Activated T-helper 1 cell treated with anti-CD3 and anti-CD28 coated beads, Interleukin-12 subunit alpha, Interleukin-12 subunit beta, Interleukin-2, Interleukin-4 antibody, amounts not matched to agents 30 ng/mL and 10 ng/mL and 1 ng/mL, durations not matched to agents 14 hours and 24 hours and 36 hours (primary cell): ENCODE measurements at regions of chr19 and their contacts with region 1.

Region 1: DNA sequence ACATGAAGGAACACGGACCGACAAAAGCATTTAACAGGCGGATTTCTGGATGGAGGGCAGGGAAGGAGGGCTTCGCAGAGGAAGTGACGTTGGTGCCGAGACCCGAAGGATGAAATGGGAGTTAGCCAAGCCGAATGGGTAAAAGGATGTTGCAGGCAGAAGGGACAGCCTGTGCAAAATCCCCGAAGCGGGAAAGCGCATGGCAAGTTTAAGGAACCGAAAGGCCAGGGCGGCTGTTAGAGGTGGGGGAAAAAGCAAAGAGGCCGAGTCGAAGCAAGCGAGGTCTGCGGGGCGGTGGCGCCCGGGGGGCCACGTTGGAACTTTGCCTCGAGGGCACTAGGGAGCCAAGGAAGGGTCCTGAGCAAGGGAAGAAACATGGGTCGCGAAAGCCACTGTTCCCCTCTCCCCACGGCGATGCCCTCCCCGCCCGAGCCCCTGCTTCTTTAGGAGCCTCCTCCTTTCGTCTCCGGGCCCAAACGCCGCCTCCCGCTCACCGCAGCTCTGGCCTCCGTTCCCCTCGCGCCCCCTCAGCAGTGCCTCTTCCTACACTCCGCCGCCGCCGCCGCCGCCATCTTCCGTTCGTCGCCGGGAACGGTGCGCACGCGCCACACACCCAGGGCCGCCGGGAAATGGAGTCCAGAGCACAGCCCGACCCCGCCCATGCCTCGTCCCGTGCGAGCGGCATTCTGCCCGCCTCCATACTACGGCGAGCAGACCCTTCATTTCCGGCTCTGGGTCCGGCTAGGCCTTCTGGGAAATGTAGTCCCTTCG is at the start of gene SYMPK:
- DNase-seq: peak; percentile 99
- H3K4me3 Mint-ChIP-seq: peak within 1 kb of the TSS; percentile 94
- H3K27ac Mint-ChIP-seq: peak within 1 kb of the TSS; percentile 95
- H3K4me1 Mint-ChIP-seq: peaks cover 29% of the 10 kb centered on the region
- H3K27me3 Mint-ChIP-seq: peaks cover 31% of the 10 kb centered on the region
- total RNA-seq, gene SYMPK: 118 and 120 TPM in 2 replicates

Region 2: GRCh38 chr19:44890366-44891015 is 972.3 kb before region 1 on chr19:
- intact Hi-C with region 1: loop called (anchors 1 kb)
- DNase-seq: peak; percentile 100
- H3K4me3 Mint-ChIP-seq: peak overlapping the region; percentile 86
- H3K27ac Mint-ChIP-seq: peak overlapping the region; percentile 96
- H3K4me1 Mint-ChIP-seq: peaks cover 30% of the 10 kb centered on the region
- H3K27me3 Mint-ChIP-seq: no peaks in the 10 kb centered on the region

Region 3: GRCh38 chr19:45730389-45731288 is 132.1 kb before region 1 on chr19 and contains the start of gene FBXO46:
- intact Hi-C with region 1: loop called (anchors 1 kb)
- DNase-seq: peak; percentile 95
- H3K4me3 Mint-ChIP-seq: peak within 1 kb of the TSS; percentile 99
- H3K27ac Mint-ChIP-seq: peak within 1 kb of the TSS; percentile 85
- H3K4me1 Mint-ChIP-seq: peaks cover 26% of the 10 kb centered on the region
- H3K27me3 Mint-ChIP-seq: peaks cover 2% of the 10 kb centered on the region
- total RNA-seq, gene FBXO46: 35.1 and 35.4 TPM in 2 replicates

Region 4: DNA sequence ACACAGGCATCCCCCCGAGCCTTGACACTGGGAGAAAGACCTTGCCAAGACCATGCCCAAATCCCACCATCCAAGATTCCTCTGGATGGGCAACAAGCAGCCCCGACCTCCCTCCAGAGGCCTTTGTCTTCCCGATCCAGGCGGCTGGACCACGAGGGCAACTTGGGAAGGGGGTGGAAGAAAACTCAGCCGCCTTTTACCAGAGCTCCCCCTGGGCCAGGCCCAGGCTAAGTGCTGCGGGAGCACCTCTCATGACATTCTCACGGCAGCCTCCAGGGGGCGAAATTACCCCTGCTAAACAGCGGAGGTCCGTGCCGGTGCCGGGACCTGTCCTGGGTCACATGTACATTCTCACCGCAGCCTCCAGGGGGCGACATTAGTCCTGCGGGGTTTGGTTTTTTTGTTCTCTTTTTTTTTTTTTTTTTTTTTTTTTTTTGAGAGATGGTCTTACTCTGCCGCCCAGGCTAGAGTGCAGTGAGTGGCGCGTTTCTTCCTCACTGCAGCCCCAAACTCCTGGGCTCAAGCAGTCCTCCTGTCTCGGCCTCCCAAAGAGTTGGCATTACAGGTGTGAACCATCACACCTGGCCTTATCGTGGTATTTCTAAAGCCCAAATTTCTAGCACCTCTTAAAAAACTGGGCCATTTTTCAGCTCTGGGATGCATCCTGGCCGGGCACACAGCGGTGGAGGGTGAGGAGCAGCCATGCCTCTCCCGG is 45.6 kb before region 1 on chr19:
- intact Hi-C with region 1: loop called (anchors 1 kb)
- DNase-seq: peak; percentile 89
- H3K4me3 Mint-ChIP-seq: no peak overlapping the region
- H3K27ac Mint-ChIP-seq: no peak overlapping the region
- H3K4me1 Mint-ChIP-seq: no peaks in the 10 kb centered on the region
- H3K27me3 Mint-ChIP-seq: no peaks in the 10 kb centered on the region

Region 5: DNA sequence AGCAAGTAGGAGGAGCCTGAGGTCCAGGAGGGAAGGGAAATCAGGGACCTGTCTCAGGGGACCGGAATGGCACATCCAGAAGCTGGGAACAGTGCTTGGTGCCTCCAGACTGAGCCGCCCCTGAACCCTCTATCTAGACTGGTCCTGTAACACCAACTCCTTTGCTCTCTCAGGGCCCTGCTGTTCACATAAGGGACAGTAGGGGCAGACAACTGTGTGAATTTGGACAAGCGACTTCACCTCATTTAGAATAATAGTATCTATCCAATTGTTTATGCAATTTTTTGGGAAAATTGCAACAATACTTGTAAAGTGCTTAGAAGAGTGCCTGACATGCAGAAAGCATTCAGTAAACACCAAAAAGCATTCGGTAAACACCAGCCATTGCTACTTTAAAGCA is 13.8 kb before region 1 on chr19:
- intact Hi-C with region 1: no loop called
- DNase-seq: no peak
- H3K4me3 Mint-ChIP-seq: no peak overlapping the region
- H3K27ac Mint-ChIP-seq: no peak overlapping the region
- H3K4me1 Mint-ChIP-seq: no peaks in the 10 kb centered on the region
- H3K27me3 Mint-ChIP-seq: no peaks in the 10 kb centered on the region

Region 6: DNA sequence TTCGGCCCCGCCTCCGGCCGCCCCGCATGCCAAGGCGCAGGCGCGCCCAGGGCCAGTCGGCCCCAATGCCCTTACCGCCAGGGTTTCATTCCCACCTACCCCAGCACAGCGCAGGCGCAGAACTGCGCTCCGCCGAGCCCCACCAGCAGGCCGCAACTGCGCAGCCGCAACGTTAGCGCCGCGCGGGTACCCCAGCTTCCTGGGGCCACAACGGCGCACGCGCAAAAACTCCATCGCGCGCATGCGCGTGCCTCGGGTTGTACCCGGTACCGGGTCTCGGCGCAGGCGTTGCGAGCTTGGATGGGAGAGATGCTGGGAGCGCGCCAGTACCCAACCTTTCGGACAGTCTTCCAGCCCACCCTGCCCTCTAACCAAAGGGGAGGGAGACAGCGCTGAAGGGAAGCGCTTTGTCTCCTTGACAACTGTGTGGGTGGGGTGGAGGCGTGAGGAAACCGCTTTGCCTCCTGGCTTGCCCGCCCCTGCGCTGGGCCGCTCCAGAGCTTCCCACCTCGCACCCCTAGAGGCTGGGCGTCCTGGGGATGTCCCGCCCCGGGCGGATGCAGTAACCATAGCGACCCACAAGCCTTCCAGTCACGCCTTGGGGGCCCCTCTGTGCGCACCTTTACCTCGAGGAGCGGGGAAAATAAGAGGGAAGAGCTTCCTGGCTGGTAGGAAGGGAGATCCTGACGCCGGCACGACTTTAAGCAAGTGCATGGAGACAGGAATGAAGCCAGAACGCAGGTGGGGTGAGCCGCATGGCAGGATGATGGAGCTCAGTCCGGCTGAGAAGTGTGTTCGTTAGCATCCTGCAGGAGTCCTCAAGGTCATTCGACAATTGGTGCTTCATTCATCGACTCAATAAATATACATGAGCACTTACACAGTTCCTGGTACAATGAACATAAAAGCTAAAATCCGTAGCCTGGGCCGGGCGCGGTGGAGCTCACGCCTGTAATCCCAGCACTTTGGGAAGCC is 40.2 kb after region 1 on chr19:
- intact Hi-C with region 1: loop called (anchors 1 kb)
- DNase-seq: peak; percentile 100
- H3K4me3 Mint-ChIP-seq: peak overlapping the region; percentile 88
- H3K27ac Mint-ChIP-seq: peak overlapping the region; percentile 80
- H3K4me1 Mint-ChIP-seq: peaks cover 16% of the 10 kb centered on the region
- H3K27me3 Mint-ChIP-seq: peaks cover 1% of the 10 kb centered on the region

Region 7: GRCh38 chr19:46016426-46017094 is 153.8 kb after region 1 on chr19:
- intact Hi-C with region 1: loop called (anchors 5 kb)
- DNase-seq: peak; percentile 74
- H3K4me3 Mint-ChIP-seq: peak overlapping the region; percentile 89
- H3K27ac Mint-ChIP-seq: peak overlapping the region; percentile 78
- H3K4me1 Mint-ChIP-seq: peaks cover 15% of the 10 kb centered on the region
- H3K27me3 Mint-ChIP-seq: peaks cover 12% of the 10 kb centered on the region